ENCODE measurements at regions of chr22 and their contacts with region 1.

Region 1: GRCh38 chr22:30634471-30635233 is 929 bp upstream of the SLC35E4 start:
- DNase-seq: peak; percentile 94
- H3K4me3 ChIP-seq: peak overlapping the region in 3 of 4 donors; percentile 59 to 76 (median 63)
- H3K27ac ChIP-seq: peak overlapping the region; percentile 93 to 98 (median 97)
- H3K4me1 ChIP-seq: peaks cover 0 to 38% (median 33%) of the 10 kb centered on the region in 4 donors
- H3K27me3 ChIP-seq: no peaks in the 10 kb centered on the region
- CTCF ChIP-seq: peak; percentile 89 to 98 (median 97)
- EP300 ChIP-seq: no peak
- POLR2A ChIP-seq: no peak

Region 2: DNA sequence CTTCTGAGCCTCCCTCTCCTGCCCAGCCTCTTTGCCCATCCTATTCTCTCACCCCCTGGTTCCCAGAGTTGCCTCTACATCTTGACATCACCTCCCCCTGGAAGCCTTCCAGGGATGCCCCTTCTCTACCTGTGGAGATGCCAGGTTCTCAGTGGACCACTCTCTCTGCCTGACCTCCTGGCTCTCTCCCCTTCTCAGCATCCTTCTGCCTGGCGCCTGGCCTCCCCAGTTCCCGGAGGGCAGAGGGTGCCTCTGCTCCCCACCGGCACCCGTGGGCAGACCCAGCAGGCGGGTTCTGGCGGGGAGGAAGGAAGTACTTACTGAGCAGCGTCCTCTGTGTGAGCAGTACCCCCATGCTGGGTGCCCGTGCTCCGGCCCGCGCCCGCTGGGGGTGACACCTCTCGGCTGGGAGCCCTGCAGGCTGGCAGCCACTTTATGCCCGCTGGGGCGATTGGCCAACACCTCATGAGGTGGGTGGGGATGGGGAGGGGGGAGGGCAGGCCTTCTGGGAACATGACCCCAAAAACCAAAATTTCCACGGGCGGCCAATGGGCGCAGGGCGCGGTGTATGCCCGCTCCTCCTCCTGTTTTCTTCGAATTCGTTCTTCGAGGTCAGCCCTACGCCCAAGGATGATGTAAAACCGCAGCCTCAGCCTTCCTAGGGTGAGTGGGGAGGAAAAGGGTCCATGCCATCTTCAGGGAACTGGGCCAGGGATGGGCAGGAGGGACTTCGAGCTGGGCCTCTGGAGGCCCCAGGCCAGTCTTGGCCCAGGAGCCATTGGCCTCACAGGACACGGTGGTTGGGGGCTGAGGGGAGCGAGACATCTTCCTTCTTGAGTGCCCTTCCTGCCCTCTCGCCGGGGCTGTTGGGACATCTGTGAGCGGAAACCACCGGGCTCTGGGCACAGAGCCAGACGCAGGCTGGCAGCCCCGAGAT is 367.9 kb before region 1 on chr22 and contains the start of gene OSM:
- intact Hi-C with region 1: no loop called
- DNase-seq: peak; percentile 82
- H3K4me3 ChIP-seq: peak within 1 kb of the TSS in 3 of 4 donors; percentile 11 to 36 (median 19)
- H3K27ac ChIP-seq: peak within 1 kb of the TSS; percentile 18 to 66 (median 54)
- H3K4me1 ChIP-seq: peaks cover 0 to 7% (median 2%) of the 10 kb centered on the region in 4 donors
- H3K27me3 ChIP-seq: no peaks in the 10 kb centered on the region
- CTCF ChIP-seq: no peak
- EP300 ChIP-seq: no peak
- POLR2A ChIP-seq: peak in 1 of 2 donors; percentile 15
- total RNA-seq, gene OSM: 0.71 to 12.8 (median 3.5) TPM

Region 3: GRCh38 chr22:30606455-30607299 is 28.0 kb before region 1 on chr22 and contains the start of gene TCN2:
- intact Hi-C with region 1: loop called (anchors 2 kb)
- DNase-seq: peak; percentile 88
- H3K4me3 ChIP-seq: peak within 1 kb of the TSS; percentile 44 to 67 (median 58)
- H3K27ac ChIP-seq: peak within 1 kb of the TSS; percentile 63 to 88 (median 82)
- H3K4me1 ChIP-seq: peaks cover 0 to 50% (median 41%) of the 10 kb centered on the region in 4 donors
- H3K27me3 ChIP-seq: no peaks in the 10 kb centered on the region
- CTCF ChIP-seq: no peak
- EP300 ChIP-seq: no peak
- POLR2A ChIP-seq: peak in 1 of 2 donors; percentile 37
- total RNA-seq, gene TCN2: 23.5 to 45.7 (median 25.5) TPM

Region 4: DNA sequence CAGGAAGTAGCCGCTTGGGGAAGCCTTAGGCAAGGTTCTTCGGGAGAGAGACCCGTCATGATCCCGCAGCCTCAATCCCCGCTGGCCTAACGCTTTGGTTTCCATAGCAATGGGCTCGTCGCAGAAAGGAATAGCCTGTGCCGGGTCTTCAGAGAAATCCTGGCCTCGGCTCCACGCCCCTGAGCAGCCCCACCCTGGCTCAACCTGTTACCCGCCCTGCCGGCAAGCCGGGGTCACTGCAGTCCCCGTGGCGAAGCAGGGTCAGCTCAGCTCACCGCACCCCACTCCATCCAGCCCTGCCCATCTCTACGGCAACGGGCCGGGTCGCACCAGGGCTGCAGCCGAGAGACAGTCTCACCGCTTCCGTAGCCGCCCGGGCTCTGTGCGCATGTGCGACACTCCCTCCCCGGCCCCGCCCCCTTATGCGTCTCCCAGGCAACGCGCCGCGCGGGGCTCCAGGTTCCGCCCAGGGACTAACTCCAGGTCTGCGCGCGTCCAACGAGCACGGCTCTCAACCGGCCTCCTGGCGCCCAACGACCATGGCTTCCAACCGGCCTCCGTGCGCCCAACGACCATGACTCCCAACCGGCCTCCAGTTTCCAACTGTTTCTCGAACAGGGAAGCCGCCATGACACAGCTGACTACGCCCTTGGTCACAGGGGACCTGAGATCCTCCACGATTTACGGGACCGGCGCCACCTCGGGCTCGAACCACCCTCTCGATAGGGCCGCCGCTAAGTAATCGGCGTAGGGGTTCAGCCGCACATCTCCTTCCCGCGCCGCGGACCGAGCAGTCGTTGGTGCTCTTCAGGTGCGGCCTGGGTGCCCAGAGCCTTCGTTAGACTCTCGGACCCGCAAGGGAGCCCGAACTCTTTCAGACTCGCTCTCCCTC is 33.1 kb after region 1 on chr22 and contains the start of gene DUSP18:
- intact Hi-C with region 1: loop called (anchors 1 kb)
- DNase-seq: peak; percentile 96
- H3K4me3 ChIP-seq: peak within 1 kb of the TSS; percentile 68 to 81 (median 76)
- H3K27ac ChIP-seq: peak within 1 kb of the TSS; percentile 58 to 71 (median 64)
- H3K4me1 ChIP-seq: peaks cover 0 to 22% (median 14%) of the 10 kb centered on the region in 4 donors
- H3K27me3 ChIP-seq: no peaks in the 10 kb centered on the region
- CTCF ChIP-seq: peak in 2 of 4 experiments; percentile 21 to 55
- EP300 ChIP-seq: no peak
- POLR2A ChIP-seq: peak; percentile 41 to 51
- total RNA-seq, gene DUSP18: 4.1 to 8.3 (median 4.2) TPM

Region 5: GRCh38 chr22:30694171-30694639 is 59.6 kb after region 1 on chr22:
- intact Hi-C with region 1: loop called (anchors 2 kb)
- DNase-seq: peak; percentile 74
- H3K4me3 ChIP-seq: peak overlapping the region; percentile 51 to 61 (median 60)
- H3K27ac ChIP-seq: peak overlapping the region in 2 of 4 donors; percentile 22 to 43
- H3K4me1 ChIP-seq: peaks cover 0 to 14% (median 10%) of the 10 kb centered on the region in 4 donors
- H3K27me3 ChIP-seq: no peaks in the 10 kb centered on the region
- CTCF ChIP-seq: peak in 1 of 4 experiments; percentile 15
- EP300 ChIP-seq: no peak
- POLR2A ChIP-seq: no peak

Region 6: GRCh38 chr22:30754971-30755756 is 120.5 kb after region 1 on chr22:
- intact Hi-C with region 1: loop called (anchors 1 kb)
- DNase-seq: peak; percentile 72
- H3K4me3 ChIP-seq: no peak overlapping the region
- H3K27ac ChIP-seq: no peak overlapping the region
- H3K4me1 ChIP-seq: no peaks in the 10 kb centered on the region
- H3K27me3 ChIP-seq: no peaks in the 10 kb centered on the region
- CTCF ChIP-seq: peak; percentile 30 to 66 (median 48)
- EP300 ChIP-seq: no peak
- POLR2A ChIP-seq: no peak

Region 7: DNA sequence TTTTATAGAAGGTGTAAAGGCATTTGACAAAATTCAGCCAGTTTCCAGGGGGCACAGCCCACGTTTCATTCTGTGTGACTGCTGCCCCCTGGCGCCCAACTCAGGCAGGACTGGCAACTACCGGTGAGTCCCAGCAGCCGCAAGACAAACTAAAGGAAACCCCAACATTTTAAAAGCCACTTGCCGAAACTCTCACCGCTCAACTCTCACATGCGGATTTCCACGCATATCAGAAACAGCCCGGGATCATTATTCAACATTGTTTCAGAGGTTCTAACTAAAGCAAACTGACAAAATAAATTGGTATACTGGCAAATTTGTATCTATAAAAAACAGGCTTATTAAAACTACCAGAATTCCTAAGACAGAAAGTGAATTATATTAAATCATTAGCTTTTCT is 285.8 kb after region 1 on chr22:
- intact Hi-C with region 1: loop called (anchors 1 kb)
- DNase-seq: peak; percentile 87
- H3K4me3 ChIP-seq: no peak overlapping the region
- H3K27ac ChIP-seq: no peak overlapping the region
- H3K4me1 ChIP-seq: peaks cover 0 to 15% (median 11%) of the 10 kb centered on the region in 4 donors
- H3K27me3 ChIP-seq: no peaks in the 10 kb centered on the region
- CTCF ChIP-seq: peak; percentile 70 to 90 (median 83)
- EP300 ChIP-seq: no peak
- POLR2A ChIP-seq: no peak

Measured in sigmoid colon (tissue), 7 donors.